ENCODE measurements at regions of chr17 and their contacts with region 1.

Region 1: GRCh38 chr17:8057691-8058114 is 18.8 kb downstream of the ALOX15B start:
- DNase-seq: peak in 3 of 6 donors; percentile 31 to 62 (median 38)
- ATAC-seq: peak; percentile 83 to 91 (median 86)
- H3K4me3 ChIP-seq: no peak overlapping the region
- H3K27ac ChIP-seq: no peak overlapping the region
- H3K4me1 ChIP-seq: peaks cover 0 to 18% (median 0%) of the 10 kb centered on the region in 3 donors
- H3K27me3 ChIP-seq: peaks cover 0 to 15% (median 0%) of the 10 kb centered on the region in 4 donors
- CTCF ChIP-seq: peak; percentile 39 to 66 (median 56)

Region 2: GRCh38 chr17:8001976-8002720 is 55.6 kb before region 1 on chr17 and contains the start of gene GUCY2D:
- intact Hi-C with region 1: loop called in 1 of 3 experiments (anchors 10 kb)
- DNase-seq: peak in 1 of 6 donors; percentile 32
- ATAC-seq: peak in 1 of 4 donors; percentile 62
- H3K4me3 ChIP-seq: peak within 1 kb of the TSS in 1 of 4 donors; percentile 18
- H3K27ac ChIP-seq: no peak within 1 kb of the TSS
- H3K4me1 ChIP-seq: peaks cover 0 to 6% (median 0%) of the 10 kb centered on the region in 3 donors
- H3K27me3 ChIP-seq: peaks cover 0 to 5% (median 2%) of the 10 kb centered on the region in 4 donors
- CTCF ChIP-seq: no peak
- total RNA-seq, gene GUCY2D: 0.22 to 0.47 (median 0.28) TPM in 4 of 6 donors, not detected in the others

Region 3: DNA sequence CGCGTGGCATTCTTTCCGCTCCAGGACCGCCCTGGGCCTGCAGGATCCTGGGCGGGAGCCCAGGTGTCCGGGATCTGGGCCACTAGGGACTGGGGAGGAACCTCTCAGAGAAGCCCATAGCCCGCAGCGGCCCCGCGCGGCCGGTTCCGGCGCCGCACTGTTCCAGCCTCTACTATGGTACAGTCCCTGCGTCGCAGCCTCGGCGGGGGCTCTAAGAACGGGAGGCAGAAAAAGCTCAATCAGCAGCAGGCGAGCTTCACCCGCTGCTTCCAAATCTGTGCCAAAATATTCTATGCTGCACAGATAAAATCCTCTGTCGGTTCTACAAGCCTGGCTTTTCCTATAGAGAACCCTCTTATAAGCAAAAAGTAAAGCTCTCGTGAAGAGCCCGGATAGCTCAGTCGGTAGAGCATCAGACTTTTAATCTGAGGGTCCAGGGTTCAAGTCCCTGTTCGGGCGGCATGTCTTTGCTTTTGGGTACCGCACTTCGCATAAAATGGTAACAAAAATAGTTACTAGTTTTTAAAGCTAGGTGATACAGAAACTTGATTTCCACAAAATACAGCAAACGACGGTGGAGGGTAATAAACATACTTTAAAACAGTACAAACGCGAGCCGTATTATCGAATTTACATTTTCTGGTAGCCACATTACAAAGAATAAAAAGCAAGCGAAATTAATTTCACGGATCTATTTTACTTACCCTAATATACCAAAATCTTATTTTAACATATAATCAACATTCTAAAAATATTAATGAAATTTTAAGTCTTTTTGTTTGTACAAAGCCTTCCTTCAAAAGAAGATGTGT is 61.3 kb after region 1 on chr17:
- intact Hi-C with region 1: loop called in 1 of 3 experiments (anchors 10 kb)
- DNase-seq: peak; percentile 83 to 96 (median 91)
- ATAC-seq: peak; percentile 75 to 79 (median 78)
- H3K4me3 ChIP-seq: peak overlapping the region; percentile 7 to 54 (median 34)
- H3K27ac ChIP-seq: peak overlapping the region; percentile 53 to 73 (median 64)
- H3K4me1 ChIP-seq: peaks cover 12 to 39% (median 28%) of the 10 kb centered on the region in 3 donors
- H3K27me3 ChIP-seq: peaks cover 0 to 9% (median 0%) of the 10 kb centered on the region in 4 donors
- CTCF ChIP-seq: peak; percentile 72 to 87 (median 73)

Measured in pancreas (tissue), 10 donors.